Naive thymus-derived CD4-positive, alpha-beta T cell (primary cell): ENCODE measurements at regions of chr1 and their contacts with region 1.

Region 1: DNA sequence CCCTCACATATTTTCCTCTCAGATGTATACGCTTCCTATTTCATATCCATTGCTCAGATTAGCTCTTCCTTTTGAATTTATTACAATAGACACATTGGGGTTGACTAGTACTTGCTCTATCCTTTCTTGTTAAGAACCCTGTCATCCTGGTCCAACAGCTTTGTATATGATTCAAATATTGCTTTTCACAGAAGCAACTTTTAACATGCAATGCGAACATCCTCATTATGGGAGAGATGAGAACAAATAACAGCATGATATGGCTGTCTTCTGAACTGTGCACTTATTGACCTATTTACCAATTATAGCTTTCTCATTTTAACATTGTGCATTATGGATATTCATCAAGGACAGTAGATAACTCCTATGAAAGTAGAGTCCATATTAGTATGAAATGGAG is 510.8 kb downstream of the PTPRC start:
- DNase-seq: no peak
- ATAC-seq: no peak
- H3K4me3 ChIP-seq: no peak overlapping the region
- H3K4me3 Mint-ChIP-seq: no peak overlapping the region
- H3K27ac ChIP-seq: no peak overlapping the region
- H3K27ac Mint-ChIP-seq: no peak overlapping the region
- H3K4me1 ChIP-seq: no peaks in the 10 kb centered on the region
- H3K4me1 Mint-ChIP-seq: no peaks in the 10 kb centered on the region
- H3K27me3 ChIP-seq: no peaks in the 10 kb centered on the region
- H3K27me3 Mint-ChIP-seq: peaks cover 0 to 57% (median 8%) of the 10 kb centered on the region in 5 donors

Region 2: GRCh38 chr1:199138061-199138460 is 11.5 kb before region 1 on chr1:
- CTCF ChIA-PET with region 1: no interaction called
- POLR2A ChIA-PET with region 1: no interaction called
- intact Hi-C with region 1: loop called in 1 of 2 experiments (anchors 1 kb)
- DNase-seq: no peak
- ATAC-seq: no peak
- H3K4me3 ChIP-seq: no peak overlapping the region
- H3K4me3 Mint-ChIP-seq: no peak overlapping the region
- H3K27ac ChIP-seq: no peak overlapping the region
- H3K27ac Mint-ChIP-seq: no peak overlapping the region
- H3K4me1 ChIP-seq: no peaks in the 10 kb centered on the region
- H3K4me1 Mint-ChIP-seq: peaks cover 0 to 6% (median 3%) of the 10 kb centered on the region in 7 donors
- H3K27me3 ChIP-seq: no peaks in the 10 kb centered on the region
- H3K27me3 Mint-ChIP-seq: peaks cover 0 to 13% (median 6%) of the 10 kb centered on the region in 5 donors